CD4-positive, alpha-beta T cell (primary cell): ENCODE measurements at regions of chr2 and their contacts with region 1.

Region 1: DNA sequence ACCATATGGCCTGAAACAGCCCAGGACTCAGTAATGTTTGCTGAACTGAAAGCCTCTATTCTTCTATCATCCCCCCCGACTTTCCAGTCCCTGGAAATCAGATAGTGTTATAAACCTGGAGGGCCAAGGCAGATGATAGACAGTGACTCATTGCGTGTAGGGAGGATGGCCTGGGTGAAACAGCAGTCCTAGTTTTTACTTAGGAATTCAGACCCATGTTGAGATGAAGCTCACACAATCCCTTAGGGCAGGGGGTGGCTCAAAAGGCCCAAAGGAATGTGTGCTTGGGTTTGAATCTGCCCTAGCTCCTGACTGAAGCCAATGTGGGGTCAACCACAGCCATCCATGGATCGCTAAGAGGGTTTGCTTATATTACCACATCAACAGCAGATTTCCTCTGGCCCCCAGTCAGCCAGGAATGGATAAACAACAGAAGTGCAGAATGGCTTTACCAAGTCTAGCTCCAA is 43.9 kb upstream of the STPG4 start:
- DNase-seq: no peak
- ATAC-seq: no peak
- H3K4me3 ChIP-seq: no peak overlapping the region
- H3K4me3 Mint-ChIP-seq: no peak overlapping the region
- H3K27ac ChIP-seq: no peak overlapping the region
- H3K27ac Mint-ChIP-seq: no peak overlapping the region
- H3K4me1 ChIP-seq: no peaks in the 10 kb centered on the region
- H3K4me1 Mint-ChIP-seq: no peaks in the 10 kb centered on the region
- H3K27me3 ChIP-seq: peaks cover 0 to 9% of the 10 kb centered on the region in 2 experiments
- H3K27me3 Mint-ChIP-seq: no peaks in the 10 kb centered on the region
- CTCF ChIP-seq: no peak

Region 2: GRCh38 chr2:47141520-47141919 is 57.5 kb before region 1 on chr2:
- CTCF ChIA-PET with region 1: no interaction called
- POLR2A ChIA-PET with region 1: interaction called, 3 read pairs
- intact Hi-C with region 1: loop called in 1 of 2 experiments (anchors 5 kb)
- DNase-seq: no peak
- ATAC-seq: no peak
- H3K4me3 ChIP-seq: no peak overlapping the region
- H3K4me3 Mint-ChIP-seq: no peak overlapping the region
- H3K27ac ChIP-seq: no peak overlapping the region
- H3K27ac Mint-ChIP-seq: no peak overlapping the region
- H3K4me1 ChIP-seq: no peaks in the 10 kb centered on the region
- H3K4me1 Mint-ChIP-seq: no peaks in the 10 kb centered on the region
- H3K27me3 ChIP-seq: no peaks in the 10 kb centered on the region
- H3K27me3 Mint-ChIP-seq: no peaks in the 10 kb centered on the region
- CTCF ChIP-seq: no peak

Region 3: GRCh38 chr2:47250630-47251403 is 51.8 kb after region 1 on chr2:
- CTCF ChIA-PET with region 1: no interaction called
- POLR2A ChIA-PET with region 1: no interaction called
- intact Hi-C with region 1: no loop called
- DNase-seq: no peak
- ATAC-seq: no peak
- H3K4me3 ChIP-seq: no peak overlapping the region
- H3K4me3 Mint-ChIP-seq: no peak overlapping the region
- H3K27ac ChIP-seq: no peak overlapping the region
- H3K27ac Mint-ChIP-seq: no peak overlapping the region
- H3K4me1 ChIP-seq: no peaks in the 10 kb centered on the region
- H3K4me1 Mint-ChIP-seq: no peaks in the 10 kb centered on the region
- H3K27me3 ChIP-seq: peaks cover 0 to 5% of the 10 kb centered on the region in 2 experiments
- H3K27me3 Mint-ChIP-seq: no peaks in the 10 kb centered on the region
- CTCF ChIP-seq: no peak

Region 4: GRCh38 chr2:47300609-47301276 is 101.7 kb after region 1 on chr2:
- CTCF ChIA-PET with region 1: no interaction called
- POLR2A ChIA-PET with region 1: no interaction called
- intact Hi-C with region 1: no loop called
- DNase-seq: peak in 3 of 14 experiments; percentile 19 to 50 (median 43)
- ATAC-seq: no peak
- H3K4me3 ChIP-seq: no peak overlapping the region
- H3K4me3 Mint-ChIP-seq: no peak overlapping the region
- H3K27ac ChIP-seq: no peak overlapping the region
- H3K27ac Mint-ChIP-seq: no peak overlapping the region
- H3K4me1 ChIP-seq: no peaks in the 10 kb centered on the region
- H3K4me1 Mint-ChIP-seq: peaks cover 13% of the 10 kb centered on the region
- H3K27me3 ChIP-seq: peaks cover 0 to 7% of the 10 kb centered on the region in 2 experiments
- H3K27me3 Mint-ChIP-seq: peaks cover 13% of the 10 kb centered on the region
- CTCF ChIP-seq: no peak